Activated B cell treated with CpG ODN at 0.5 μM for 24 hours (primary cell): ENCODE measurements at regions of chr12 and their contacts with region 1.

Region 1: DNA sequence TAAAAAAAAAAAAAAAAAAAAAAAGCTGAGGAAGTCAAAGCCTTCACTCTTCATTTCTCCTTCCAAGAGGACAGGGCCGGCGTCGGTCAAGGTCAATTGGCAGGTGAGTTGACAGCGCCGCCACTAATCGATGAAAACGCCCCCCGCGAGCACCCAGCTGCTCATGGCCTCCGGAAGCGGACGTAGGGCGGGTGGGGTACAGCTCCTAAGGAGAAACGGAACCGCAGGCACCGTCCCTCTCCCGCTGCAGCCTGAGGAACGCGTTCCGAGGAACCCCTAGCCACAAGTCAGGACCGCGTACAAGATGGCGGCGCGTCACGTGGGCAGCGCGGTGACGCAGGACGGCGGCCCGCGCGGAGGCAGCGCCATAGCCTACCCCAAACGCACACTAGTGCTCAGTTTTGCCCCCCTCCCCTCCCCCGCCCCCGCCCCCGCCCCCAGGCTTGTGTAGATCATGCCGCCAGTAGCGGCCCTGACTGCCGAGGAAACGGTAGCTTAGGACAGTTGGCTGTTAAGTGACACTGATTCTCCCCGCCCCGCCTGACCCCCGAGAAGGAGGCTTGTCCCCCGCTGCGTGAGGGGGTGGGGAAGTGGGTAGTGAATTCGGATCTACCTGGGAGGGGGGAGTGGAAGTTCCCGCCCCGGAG is at the start of gene ATF1:
- DNase-seq: peak; percentile 89
- ATAC-seq: peak; percentile 80
- H3K4me3 Mint-ChIP-seq: peak within 1 kb of the TSS; percentile 95
- H3K27ac Mint-ChIP-seq: peak within 1 kb of the TSS; percentile 96
- H3K4me1 Mint-ChIP-seq: peaks cover 36% of the 10 kb centered on the region
- H3K27me3 Mint-ChIP-seq: no peaks in the 10 kb centered on the region
- CTCF ChIP-seq: no peak
- total RNA-seq, gene ATF1: 37.7 and 42.5 TPM in 2 replicates

Region 2: DNA sequence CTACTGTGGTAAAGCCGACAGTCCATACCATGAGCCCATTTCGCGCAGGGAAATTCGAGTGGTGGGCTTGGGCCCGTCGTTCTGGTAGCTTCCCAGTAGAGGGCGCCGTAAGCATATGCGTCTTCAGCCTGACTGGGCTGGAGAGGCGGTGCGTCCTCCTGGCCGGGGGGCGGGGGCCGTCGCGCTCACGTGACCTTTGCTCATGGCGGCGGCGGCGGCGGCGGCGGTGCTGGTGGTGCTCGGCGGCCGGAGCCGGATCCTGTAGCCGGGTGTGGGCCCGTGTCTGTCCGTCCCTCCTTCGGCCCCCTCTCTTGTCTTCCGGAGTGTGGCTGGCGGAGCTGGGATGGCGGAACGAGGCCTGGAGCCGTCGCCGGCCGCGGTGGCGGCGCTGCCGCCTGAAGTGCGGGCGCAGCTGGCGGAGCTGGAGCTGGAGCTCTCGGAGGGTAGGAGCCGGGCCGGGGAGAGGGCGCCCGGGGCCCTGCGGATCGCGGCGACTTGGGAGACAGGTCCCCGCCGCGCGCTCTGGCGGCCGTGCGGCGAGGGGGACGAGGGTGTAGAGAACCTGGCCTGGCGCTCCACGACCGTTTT is 258.9 kb before region 1 on chr12 and contains the start of gene DIP2B:
- CTCF ChIA-PET with region 1: no interaction called
- POLR2A ChIA-PET with region 1: interaction called, 7 read pairs
- intact Hi-C with region 1: loop called (anchors 1 kb)
- DNase-seq: peak; percentile 95
- ATAC-seq: peak; percentile 88
- H3K4me3 Mint-ChIP-seq: peak within 1 kb of the TSS; percentile 95
- H3K27ac Mint-ChIP-seq: peak within 1 kb of the TSS; percentile 95
- H3K4me1 Mint-ChIP-seq: peaks cover 48% of the 10 kb centered on the region
- H3K27me3 Mint-ChIP-seq: no peaks in the 10 kb centered on the region
- CTCF ChIP-seq: no peak
- total RNA-seq, gene DIP2B: 32.2 and 32.3 TPM in 2 replicates

Region 3: GRCh38 chr12:50734409-50735263 is 29.1 kb before region 1 on chr12:
- CTCF ChIA-PET with region 1: no interaction called
- POLR2A ChIA-PET with region 1: no interaction called
- intact Hi-C with region 1: no loop called
- DNase-seq: no peak
- ATAC-seq: no peak
- H3K4me3 Mint-ChIP-seq: no peak overlapping the region
- H3K27ac Mint-ChIP-seq: no peak overlapping the region
- H3K4me1 Mint-ChIP-seq: no peaks in the 10 kb centered on the region
- H3K27me3 Mint-ChIP-seq: no peaks in the 10 kb centered on the region
- CTCF ChIP-seq: no peak

Region 4: DNA sequence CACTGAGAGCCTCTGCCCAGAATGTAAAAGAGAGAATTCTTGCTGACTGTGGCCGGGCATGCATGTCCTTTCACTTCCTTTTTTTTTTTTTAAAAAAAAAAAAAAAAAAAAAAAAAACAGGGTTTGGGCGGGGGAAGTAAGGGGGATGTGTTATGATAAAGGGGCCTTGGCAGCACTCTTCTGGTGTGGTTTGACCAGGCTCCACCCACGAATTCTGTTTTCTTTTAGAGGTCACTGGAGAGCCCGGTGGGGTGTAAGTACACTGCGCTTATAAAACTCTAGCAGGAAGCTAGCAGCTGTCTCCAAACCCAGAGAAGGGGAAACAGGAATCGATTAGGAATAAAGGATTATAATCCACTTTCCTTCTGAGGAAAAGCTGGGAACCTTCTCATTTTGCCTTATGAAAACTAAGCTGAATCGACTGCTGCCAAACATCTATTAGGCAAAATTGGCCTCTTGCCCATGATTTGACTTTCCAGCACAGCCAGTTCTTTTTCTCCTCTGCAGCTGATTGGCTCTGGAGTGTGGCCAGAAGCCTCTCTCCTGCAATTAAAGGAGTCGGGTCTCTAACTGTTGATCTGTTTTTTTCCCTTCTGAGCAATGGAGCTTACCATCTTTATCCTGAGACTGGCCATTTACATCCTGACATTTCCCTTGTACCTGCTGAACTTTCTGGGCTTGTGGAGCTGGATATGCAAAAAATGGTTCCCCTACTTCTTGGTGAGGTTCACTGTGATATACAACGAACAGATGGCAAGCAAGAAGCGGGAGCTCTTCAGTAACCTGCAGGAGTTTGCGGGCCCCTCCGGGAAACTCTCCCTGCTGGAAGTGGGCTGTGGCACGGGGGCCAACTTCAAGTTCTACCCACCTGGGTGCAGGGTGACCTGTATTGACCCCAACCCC is 160.9 kb after region 1 on chr12:
- CTCF ChIA-PET with region 1: interaction called, 6 read pairs
- POLR2A ChIA-PET with region 1: interaction called, 13 read pairs
- intact Hi-C with region 1: loop called (anchors 2 kb)
- DNase-seq: peak; percentile 49
- ATAC-seq: peak; percentile 88
- H3K4me3 Mint-ChIP-seq: peak overlapping the region; percentile 97
- H3K27ac Mint-ChIP-seq: peak overlapping the region; percentile 98
- H3K4me1 Mint-ChIP-seq: peaks cover 75% of the 10 kb centered on the region
- H3K27me3 Mint-ChIP-seq: no peaks in the 10 kb centered on the region
- CTCF ChIP-seq: no peak

Region 5: GRCh38 chr12:51025836-51026638 is 262.3 kb after region 1 on chr12 and contains the start of gene SLC11A2:
- CTCF ChIA-PET with region 1: no interaction called
- POLR2A ChIA-PET with region 1: interaction called, 6 read pairs
- intact Hi-C with region 1: loop called (anchors 2 kb)
- DNase-seq: peak; percentile 86
- ATAC-seq: peak; percentile 98
- H3K4me3 Mint-ChIP-seq: peak within 1 kb of the TSS; percentile 99
- H3K27ac Mint-ChIP-seq: peak within 1 kb of the TSS; percentile 93
- H3K4me1 Mint-ChIP-seq: peaks cover 42% of the 10 kb centered on the region
- H3K27me3 Mint-ChIP-seq: no peaks in the 10 kb centered on the region
- CTCF ChIP-seq: no peak
- total RNA-seq, gene SLC11A2: 32.3 and 44.6 TPM in 2 replicates

Region 6: GRCh38 chr12:51083126-51083833 is 319.5 kb after region 1 on chr12 and contains the start of gene CSRNP2:
- CTCF ChIA-PET with region 1: no interaction called
- POLR2A ChIA-PET with region 1: interaction called, 7 read pairs
- intact Hi-C with region 1: loop called (anchors 2 kb)
- DNase-seq: peak; percentile 92
- ATAC-seq: peak; percentile 99
- H3K4me3 Mint-ChIP-seq: peak within 1 kb of the TSS; percentile 96
- H3K27ac Mint-ChIP-seq: peak within 1 kb of the TSS; percentile 71
- H3K4me1 Mint-ChIP-seq: peaks cover 20% of the 10 kb centered on the region
- H3K27me3 Mint-ChIP-seq: no peaks in the 10 kb centered on the region
- CTCF ChIP-seq: no peak
- total RNA-seq, gene CSRNP2: 16.9 and 17.7 TPM in 2 replicates